IMR-90 (cell line): ENCODE measurements at regions of chr11 and their contacts with region 1.

Region 1: GRCh38 chr11:43680521-43681400 is at the start of gene HSD17B12:
- DNase-seq: peak; percentile 99
- ATAC-seq: peak; percentile 99
- H3K4me3 ChIP-seq: peak within 1 kb of the TSS; percentile 65
- H3K27ac ChIP-seq: peak within 1 kb of the TSS; percentile 20
- H3K4me1 ChIP-seq: no peaks in the 10 kb centered on the region; the same call in 1 of the 2 replicates
- H3K27me3 ChIP-seq: peaks cover under 1% of the 10 kb centered on the region; the same call in 1 of the 2 replicates
- CTCF ChIP-seq: no peak
- POLR2A ChIP-seq: peak; percentile 96
- RAD21 ChIP-seq: no peak
- total RNA-seq, gene HSD17B12: 44.6 and 61.1 TPM in 2 replicates

Region 2: DNA sequence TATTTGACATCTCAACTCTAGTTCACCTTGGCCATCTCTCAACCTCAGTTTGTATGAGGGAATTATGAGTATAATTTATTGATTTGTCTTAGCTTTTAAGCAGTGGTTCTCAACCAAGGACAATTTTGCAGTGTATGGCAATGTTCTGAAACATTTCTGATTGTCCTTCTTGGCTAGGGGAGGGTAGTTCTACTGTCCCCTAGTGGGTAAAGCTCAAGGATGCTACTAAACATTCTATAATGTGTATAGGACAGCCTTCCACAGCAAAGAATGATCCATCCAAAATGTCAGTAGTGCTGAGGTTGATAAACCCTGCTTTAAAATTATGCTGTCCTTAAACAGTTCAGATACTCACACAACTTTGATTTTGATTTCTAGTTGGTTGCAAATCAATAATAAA is 121.7 kb after region 1 on chr11:
- CTCF ChIA-PET with region 1: interaction called, 3 read pairs
- POLR2A ChIA-PET with region 1: no interaction called
- dilution Hi-C with region 1: no loop called
- in situ Hi-C with region 1: no loop called
- intact Hi-C with region 1: loop called (anchors 5 kb)
- DNase-seq: peak; percentile 16
- ATAC-seq: 0 out of 2 replicates have a peak, but pooled peaks have one; percentile 21
- H3K4me3 ChIP-seq: no peak overlapping the region
- H3K27ac ChIP-seq: no peak overlapping the region
- H3K4me1 ChIP-seq: peaks cover 2% of the 10 kb centered on the region
- H3K27me3 ChIP-seq: no peaks in the 10 kb centered on the region
- CTCF ChIP-seq: peak; percentile 47
- POLR2A ChIP-seq: no peak
- RAD21 ChIP-seq: peak; percentile 44

Region 3: GRCh38 chr11:43830928-43831440 is 150.2 kb after region 1 on chr11:
- CTCF ChIA-PET with region 1: no interaction called
- POLR2A ChIA-PET with region 1: no interaction called
- dilution Hi-C with region 1: no loop called
- in situ Hi-C with region 1: no loop called
- intact Hi-C with region 1: loop called (anchors 2 kb)
- DNase-seq: peak; percentile 100
- ATAC-seq: peak; percentile 94
- H3K4me3 ChIP-seq: no peak overlapping the region
- H3K27ac ChIP-seq: peak overlapping the region; percentile 14; the same call in 1 of the 2 replicates
- H3K4me1 ChIP-seq: peaks cover 6% of the 10 kb centered on the region; the same call in 1 of the 2 replicates
- H3K27me3 ChIP-seq: no peaks in the 10 kb centered on the region
- CTCF ChIP-seq: no peak
- POLR2A ChIP-seq: no peak
- RAD21 ChIP-seq: no peak